Mammary epithelial cell (primary cell): ENCODE measurements at regions of chr17 and their contacts with region 1.

Region 1: DNA sequence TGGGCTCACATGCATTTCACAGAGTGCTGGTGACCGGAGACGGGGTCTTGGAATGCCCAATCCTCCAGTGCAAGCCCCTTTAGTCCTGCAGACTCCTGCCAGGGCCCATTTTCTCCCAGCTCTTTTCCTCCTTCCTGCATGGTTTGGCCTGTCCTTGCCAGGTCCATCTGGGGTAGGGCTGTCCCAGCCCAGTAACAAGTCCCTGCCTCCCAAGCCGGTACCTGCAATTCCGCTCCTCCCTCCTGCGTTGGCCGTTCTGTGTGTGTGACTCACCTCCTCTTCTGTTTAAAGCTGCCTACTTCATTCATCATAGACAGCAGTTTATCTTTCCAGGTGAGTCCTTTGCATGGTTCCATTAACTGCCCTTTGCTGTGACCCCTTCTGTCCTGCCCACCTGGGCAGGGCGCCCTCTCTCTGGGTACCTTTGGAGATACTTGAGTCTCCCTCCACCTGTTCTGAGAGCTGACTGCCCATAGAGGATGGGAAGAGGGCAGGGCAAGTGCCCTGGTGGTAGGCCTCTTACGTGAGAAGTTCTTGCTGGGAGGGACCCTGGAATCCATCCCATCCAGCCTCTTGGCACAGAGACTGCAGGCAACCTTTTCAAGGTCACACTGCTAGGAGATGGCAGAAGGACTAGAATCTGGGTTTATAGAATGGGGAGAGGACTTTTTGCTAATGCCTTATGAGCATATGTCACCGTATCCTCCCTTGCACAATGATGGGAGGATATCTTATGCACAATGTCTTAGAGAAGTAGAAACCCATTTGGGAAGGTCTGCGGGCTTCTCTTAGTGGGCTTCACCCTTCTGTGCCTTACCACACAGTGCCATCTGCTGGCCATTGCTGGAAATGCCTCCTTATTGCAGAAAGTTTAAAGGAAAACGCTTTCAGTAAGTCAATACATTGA is 29.7 kb upstream of the LGALS9 start:
- DNase-seq: peak; percentile 49
- H3K4me3 ChIP-seq: no peak overlapping the region
- H3K27ac ChIP-seq: no peak overlapping the region
- H3K4me1 ChIP-seq: peaks cover 13% of the 10 kb centered on the region
- H3K27me3 ChIP-seq: no peaks in the 10 kb centered on the region
- CTCF ChIP-seq: peak; percentile 89 to 96

Region 2: GRCh38 chr17:27206447-27206846 is 394.9 kb before region 1 on chr17:
- CTCF ChIA-PET with region 1: no interaction called
- dilution Hi-C with region 1: no loop called
- in situ Hi-C with region 1: loop called in 1 of 2 experiments (anchors 10 kb)
- intact Hi-C with region 1: no loop called
- DNase-seq: no peak
- H3K4me3 ChIP-seq: no peak overlapping the region
- H3K27ac ChIP-seq: no peak overlapping the region
- H3K4me1 ChIP-seq: peaks cover 8% of the 10 kb centered on the region
- H3K27me3 ChIP-seq: no peaks in the 10 kb centered on the region
- CTCF ChIP-seq: peak; percentile 14 to 41

Region 3: DNA sequence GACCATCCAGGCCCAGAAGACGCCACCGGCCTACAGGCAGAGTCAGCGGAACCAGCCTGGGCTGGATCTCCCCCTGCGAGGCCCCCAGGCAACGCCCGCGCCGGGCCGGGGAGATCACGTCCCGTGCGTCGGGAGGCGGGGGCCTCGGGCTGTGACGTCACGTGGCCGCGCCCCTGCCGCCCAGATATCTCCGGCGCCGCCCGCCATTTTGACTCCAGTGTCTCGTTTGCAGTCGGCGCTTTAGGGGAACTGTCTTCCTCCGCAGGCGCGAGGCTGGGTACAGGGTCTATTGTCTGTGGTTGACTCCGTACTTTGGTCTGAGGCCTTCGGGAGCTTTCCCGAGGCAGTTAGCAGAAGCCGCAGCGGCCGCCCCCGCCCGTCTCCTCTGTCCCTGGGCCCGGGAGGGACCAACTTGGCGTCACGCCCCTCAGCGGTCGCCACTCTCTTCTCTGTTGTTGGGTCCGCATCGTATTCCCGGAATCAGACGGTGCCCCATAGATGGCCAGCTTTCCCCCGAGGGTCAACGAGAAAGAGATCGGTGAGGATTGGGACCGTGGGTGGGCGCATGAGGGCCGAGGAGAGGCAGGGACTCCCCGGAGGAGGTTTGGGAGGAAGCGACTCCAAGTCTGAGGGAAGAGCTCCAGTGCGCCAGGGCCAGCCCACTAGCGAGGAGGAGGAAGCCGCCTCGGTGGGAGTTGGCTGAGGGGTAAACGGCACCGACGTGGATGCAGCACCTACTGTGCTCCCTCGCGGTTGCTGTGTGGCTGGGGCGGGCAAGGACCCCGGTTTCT is 307.2 kb before region 1 on chr17 and contains the start of gene WSB1:
- CTCF ChIA-PET with region 1: interaction called, 3 read pairs
- dilution Hi-C with region 1: no loop called
- in situ Hi-C with region 1: no loop called
- intact Hi-C with region 1: loop called (anchors 5 kb)
- DNase-seq: peak; percentile 84
- H3K4me3 ChIP-seq: peak within 1 kb of the TSS; percentile 75 to 97 (median 94)
- H3K27ac ChIP-seq: peak within 1 kb of the TSS; percentile 93
- H3K4me1 ChIP-seq: peaks cover 16% of the 10 kb centered on the region
- H3K27me3 ChIP-seq: no peaks in the 10 kb centered on the region
- CTCF ChIP-seq: peak in 1 of 2 donors; percentile 3
- total RNA-seq, gene WSB1: 93.0 to 119 TPM

Region 4: DNA sequence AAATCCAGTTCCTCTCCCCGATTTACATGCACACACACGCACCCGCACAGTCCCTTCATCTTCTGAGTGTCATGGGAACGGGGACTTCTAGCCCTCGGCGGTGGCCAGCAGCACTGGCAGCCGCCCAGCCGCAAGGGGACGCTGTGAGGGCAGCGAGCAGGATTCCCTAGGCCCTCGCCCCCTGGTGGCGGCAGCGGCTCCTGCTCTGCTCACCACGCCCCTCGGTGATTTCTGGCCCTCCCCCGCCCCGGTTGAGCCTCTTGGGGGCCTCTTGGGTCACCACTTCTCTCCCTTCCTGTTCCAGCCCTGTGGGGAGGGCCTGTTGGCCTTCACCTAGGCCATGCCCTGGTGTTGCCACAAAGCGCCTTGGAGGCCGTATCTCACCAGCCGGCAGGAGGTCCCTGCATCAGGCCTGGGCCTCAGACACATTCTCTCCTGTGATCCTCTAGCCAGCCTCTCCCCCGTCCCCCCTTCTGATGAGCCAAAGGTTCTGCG is 220.3 kb before region 1 on chr17:
- CTCF ChIA-PET with region 1: no interaction called
- dilution Hi-C with region 1: no loop called
- in situ Hi-C with region 1: no loop called
- intact Hi-C with region 1: loop called (anchors 1 kb)
- DNase-seq: peak; percentile 23
- H3K4me3 ChIP-seq: no peak overlapping the region
- H3K27ac ChIP-seq: no peak overlapping the region
- H3K4me1 ChIP-seq: peaks cover 35% of the 10 kb centered on the region
- H3K27me3 ChIP-seq: no peaks in the 10 kb centered on the region
- CTCF ChIP-seq: peak; percentile 78 to 84

Region 5: GRCh38 chr17:27494192-27495091 is 106.9 kb before region 1 on chr17:
- CTCF ChIA-PET with region 1: interaction called, 15 read pairs
- dilution Hi-C with region 1: no loop called
- in situ Hi-C with region 1: loop called (anchors 10 kb)
- intact Hi-C with region 1: loop called (anchors 1 kb)
- DNase-seq: peak; percentile 51
- H3K4me3 ChIP-seq: peak overlapping the region; percentile 8 to 34 (median 22)
- H3K27ac ChIP-seq: no peak overlapping the region
- H3K4me1 ChIP-seq: peaks cover 22% of the 10 kb centered on the region
- H3K27me3 ChIP-seq: no peaks in the 10 kb centered on the region
- CTCF ChIP-seq: peak; percentile 42 to 77

Region 6: DNA sequence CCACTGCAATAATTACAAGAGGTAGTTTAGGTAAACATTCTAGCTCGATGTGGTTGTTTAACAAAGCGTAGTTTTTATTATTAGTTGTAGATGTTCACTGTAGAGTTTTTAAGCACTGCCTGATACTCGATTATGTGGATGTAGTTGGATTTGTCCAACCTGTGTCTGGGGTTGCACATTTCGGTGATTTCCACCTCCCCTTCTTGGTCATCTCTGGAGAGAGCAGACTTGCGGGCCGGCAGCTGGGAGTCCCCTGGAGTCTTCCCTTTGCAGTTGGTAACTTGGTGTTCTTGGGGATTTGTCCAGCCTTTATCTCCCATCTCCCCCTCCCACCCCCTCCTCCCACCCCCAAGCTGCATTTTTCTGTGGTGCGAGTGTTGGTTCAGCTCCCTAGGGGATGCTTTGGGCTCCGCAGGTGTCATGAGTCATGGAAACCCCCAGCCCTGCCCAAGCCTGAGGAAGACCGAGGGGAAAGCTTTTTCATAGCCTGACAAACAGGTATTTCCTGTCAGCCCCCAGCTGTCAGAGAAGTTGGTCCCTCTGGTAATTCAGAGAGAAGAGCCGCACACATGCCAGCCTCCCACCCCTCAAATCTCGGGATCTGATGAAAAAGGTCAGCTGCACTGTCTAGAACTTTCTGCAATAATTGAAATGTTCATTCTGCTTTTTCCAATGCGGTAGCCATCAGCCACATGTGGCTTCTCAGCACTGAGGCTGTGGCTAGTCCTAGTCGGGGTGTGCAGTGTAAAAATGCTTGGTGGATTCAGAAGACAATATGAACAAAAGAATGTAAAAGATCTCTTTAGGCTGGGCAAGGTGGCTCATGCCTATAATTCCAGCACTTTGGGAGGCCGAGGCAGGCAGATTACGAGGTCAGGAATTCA is 94.7 kb before region 1 on chr17:
- CTCF ChIA-PET with region 1: no interaction called
- dilution Hi-C with region 1: no loop called
- in situ Hi-C with region 1: no loop called
- intact Hi-C with region 1: no loop called
- DNase-seq: no peak
- H3K4me3 ChIP-seq: no peak overlapping the region
- H3K27ac ChIP-seq: no peak overlapping the region
- H3K4me1 ChIP-seq: no peaks in the 10 kb centered on the region
- H3K27me3 ChIP-seq: no peaks in the 10 kb centered on the region
- CTCF ChIP-seq: no peak

Region 7: DNA sequence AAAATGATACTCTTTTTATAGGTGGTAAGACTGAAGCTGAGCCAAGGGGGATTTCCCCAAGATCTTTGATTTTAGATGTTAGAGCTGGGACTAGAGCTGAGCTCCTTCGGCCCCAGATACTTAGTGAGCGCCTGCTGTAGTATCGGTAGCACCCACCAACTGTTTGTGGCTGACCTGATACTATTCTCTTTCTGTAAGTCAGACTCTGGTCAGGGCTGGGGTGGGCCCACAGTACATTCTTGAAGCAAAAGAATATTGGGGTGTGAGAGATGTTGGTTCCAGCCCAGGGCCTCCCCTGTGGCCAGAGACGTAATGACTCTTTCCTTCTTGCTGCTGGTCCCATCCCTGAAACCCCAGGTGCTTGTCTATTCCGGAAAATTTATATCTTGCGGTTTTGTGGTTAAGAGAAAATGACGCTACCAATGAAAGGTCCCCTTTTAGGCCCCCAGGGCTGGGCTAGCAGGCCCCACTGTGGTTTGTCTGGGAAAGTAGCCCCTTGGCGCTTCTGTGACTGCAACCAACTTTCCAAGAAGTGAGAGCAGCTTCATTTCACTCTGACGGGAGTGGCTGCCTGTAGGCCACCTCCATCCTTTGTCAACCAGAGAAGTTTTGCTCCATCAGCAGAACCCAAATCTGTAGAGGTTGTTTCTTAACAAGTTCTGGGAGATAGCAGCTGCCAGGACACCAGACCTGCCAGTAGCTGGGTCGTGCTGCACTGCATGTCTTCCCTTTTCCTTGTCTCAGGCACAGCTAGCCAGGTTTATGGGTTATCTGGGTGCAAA is 56.8 kb before region 1 on chr17:
- CTCF ChIA-PET with region 1: no interaction called
- dilution Hi-C with region 1: no loop called
- in situ Hi-C with region 1: no loop called
- intact Hi-C with region 1: no loop called
- DNase-seq: peak; percentile 54
- H3K4me3 ChIP-seq: no peak overlapping the region
- H3K27ac ChIP-seq: no peak overlapping the region
- H3K4me1 ChIP-seq: no peaks in the 10 kb centered on the region
- H3K27me3 ChIP-seq: no peaks in the 10 kb centered on the region
- CTCF ChIP-seq: no peak

Region 8: DNA sequence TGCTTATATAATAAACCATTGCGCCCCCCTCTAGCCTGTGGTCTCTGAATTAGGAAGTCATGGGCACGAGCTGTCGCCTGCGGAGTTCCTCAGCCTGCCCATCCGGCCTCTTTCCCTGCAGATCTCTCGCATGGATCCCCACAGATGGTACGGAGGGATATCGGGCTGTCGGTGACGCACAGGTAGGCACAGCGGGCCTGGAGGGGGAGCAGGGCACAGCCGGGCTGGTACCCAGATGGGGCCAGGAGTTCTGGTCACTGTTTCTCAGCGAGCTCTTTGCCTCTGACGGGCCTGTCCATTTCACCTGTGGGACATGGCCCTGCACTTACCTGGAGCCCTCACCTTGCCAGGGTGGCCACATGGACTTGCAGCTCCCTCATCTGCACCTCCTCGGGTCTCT is 13.0 kb before region 1 on chr17:
- CTCF ChIA-PET with region 1: no interaction called
- dilution Hi-C with region 1: no loop called
- in situ Hi-C with region 1: no loop called
- intact Hi-C with region 1: no loop called
- DNase-seq: no peak
- H3K4me3 ChIP-seq: no peak overlapping the region
- H3K27ac ChIP-seq: no peak overlapping the region
- H3K4me1 ChIP-seq: no peaks in the 10 kb centered on the region
- H3K27me3 ChIP-seq: no peaks in the 10 kb centered on the region
- CTCF ChIP-seq: no peak

Region 9: GRCh38 chr17:27807567-27808470 is 206.5 kb after region 1 on chr17:
- CTCF ChIA-PET with region 1: no interaction called
- dilution Hi-C with region 1: no loop called
- in situ Hi-C with region 1: no loop called
- intact Hi-C with region 1: no loop called
- DNase-seq: no peak
- H3K4me3 ChIP-seq: no peak overlapping the region
- H3K27ac ChIP-seq: no peak overlapping the region
- H3K4me1 ChIP-seq: peaks cover 5% of the 10 kb centered on the region
- H3K27me3 ChIP-seq: no peaks in the 10 kb centered on the region
- CTCF ChIP-seq: no peak

Region 10: DNA sequence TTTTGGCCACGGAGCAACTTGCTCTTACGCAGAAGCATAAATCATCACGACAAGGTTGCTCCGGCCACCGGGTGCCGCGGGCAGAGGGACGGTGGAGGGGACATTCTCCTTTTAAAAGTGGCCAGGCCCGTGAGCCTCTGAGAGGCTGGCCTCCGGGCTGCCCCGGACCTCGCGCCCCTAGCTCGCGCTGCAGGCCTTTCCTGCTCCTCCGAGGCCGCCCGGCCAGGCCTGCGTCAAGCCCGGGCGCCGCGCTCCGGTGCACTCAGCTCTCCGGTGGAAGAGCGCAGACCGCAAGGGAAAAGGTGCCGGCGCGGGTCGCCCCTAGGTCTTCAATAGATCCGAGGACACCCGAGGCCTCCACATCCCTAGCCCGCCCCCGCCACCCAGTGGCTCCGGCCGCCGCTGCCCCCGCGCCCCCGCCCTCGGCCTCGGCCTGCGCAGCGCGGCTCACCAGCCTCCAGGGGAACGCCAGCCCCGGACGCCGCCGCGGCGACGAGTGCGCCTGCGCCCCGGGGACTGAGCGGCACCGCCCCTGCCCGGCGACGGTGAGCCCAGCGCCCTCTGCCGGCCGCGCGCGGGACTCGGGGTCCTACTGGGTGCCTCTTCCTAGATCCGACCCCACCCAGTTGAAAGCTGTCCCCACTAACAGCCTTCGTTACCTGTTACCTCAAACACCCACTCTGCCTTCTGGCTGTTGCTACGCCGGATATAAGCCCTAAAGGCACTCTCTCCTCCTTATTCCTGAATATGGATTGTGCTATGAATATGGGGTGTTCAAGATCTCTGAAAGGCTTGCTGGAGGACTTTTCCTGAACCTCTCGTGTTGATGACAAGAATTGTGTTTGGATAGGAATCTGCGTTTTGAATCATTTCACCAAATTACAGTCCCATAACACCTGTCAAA is 291.8 kb after region 1 on chr17 and contains the start of gene LYRM9:
- CTCF ChIA-PET with region 1: no interaction called
- dilution Hi-C with region 1: loop called (anchors 25 kb)
- in situ Hi-C with region 1: no loop called
- intact Hi-C with region 1: no loop called
- DNase-seq: peak; percentile 78
- H3K4me3 ChIP-seq: peak within 1 kb of the TSS; percentile 54 to 68 (median 58)
- H3K27ac ChIP-seq: no peak within 1 kb of the TSS
- H3K4me1 ChIP-seq: no peaks in the 10 kb centered on the region
- H3K27me3 ChIP-seq: no peaks in the 10 kb centered on the region
- CTCF ChIP-seq: peak; percentile 74 to 78
- total RNA-seq, gene LYRM9: 4.3 to 9.8 TPM